A673 (cell line): ENCODE measurements at regions of chr13 and their contacts with region 1.

Region 1: DNA sequence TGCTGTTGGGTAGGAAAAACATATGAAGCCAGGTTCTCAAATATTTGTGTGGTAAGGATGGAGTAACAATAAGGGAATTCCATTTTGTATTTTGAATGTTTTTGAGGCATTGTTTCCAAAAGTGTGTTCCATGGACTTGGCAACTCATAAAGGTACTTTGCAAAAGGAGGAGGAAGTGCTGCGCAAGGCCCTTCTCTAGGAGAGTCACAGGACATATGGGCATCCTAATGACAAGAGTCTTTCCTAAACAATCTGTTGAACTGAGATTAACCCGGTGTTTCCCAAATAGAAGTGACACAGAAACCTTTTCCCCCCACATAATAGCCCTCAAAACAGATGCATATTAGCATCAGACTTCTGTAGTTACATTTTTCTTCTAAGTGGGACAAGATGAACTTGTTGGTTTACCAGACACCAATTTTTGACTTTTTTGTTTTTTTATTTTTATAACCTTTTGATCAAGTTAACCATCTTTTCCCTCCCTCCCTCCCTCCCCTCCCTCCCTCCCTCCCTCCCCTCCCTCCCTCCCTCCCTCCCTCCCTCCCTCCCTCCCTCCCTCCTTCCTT is 209.3 kb downstream of the PCCA start:
- DNase-seq: peak; percentile 95
- H3K4me3 ChIP-seq: no peak overlapping the region
- H3K27ac ChIP-seq: peak overlapping the region; percentile 98
- H3K4me1 ChIP-seq: peaks cover 84% of the 10 kb centered on the region
- H3K27me3 ChIP-seq: no peaks in the 10 kb centered on the region
- CTCF ChIP-seq: no peak

Region 2: DNA sequence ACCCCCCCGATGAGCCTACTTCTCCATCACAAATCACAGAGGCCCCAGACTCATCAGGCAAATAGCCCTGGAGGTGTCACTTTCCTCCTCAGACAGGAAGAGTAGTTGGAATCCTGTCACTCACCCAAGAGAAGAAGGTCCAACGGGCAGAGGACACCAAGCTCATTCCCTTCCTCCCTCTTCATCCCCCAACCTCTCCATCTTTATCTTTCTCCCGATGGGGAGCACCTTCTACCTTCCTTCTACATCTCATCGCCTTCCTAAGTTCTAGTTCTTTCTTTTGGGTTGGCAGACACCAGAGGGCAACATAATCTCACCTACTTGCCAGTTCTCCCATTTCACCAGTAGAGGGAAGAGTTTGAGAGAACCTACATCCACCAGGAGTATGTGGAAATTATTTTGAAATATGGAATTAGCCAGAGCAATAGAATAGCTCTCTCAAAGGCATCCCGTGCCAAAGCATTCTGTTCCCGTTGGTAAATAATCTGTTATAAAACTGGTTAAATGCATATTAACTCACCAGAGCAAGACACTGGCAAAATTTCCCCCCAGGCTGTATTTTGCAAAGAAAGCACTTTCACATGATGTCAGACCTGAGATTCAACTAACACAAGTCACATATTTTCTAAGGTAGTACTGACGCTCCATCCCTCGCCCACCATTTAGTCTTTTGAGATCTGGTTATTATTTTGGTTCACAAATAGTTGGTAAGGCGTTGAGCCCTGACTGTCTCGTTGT is 381.7 kb before region 1 on chr13:
- CTCF ChIA-PET with region 1: no interaction called
- POLR2A ChIA-PET with region 1: interaction called, 11 read pairs
- intact Hi-C with region 1: loop called (anchors 5 kb)
- DNase-seq: peak; percentile 85
- H3K4me3 ChIP-seq: no peak overlapping the region
- H3K27ac ChIP-seq: no peak overlapping the region
- H3K4me1 ChIP-seq: peaks cover 19% of the 10 kb centered on the region
- H3K27me3 ChIP-seq: no peaks in the 10 kb centered on the region
- CTCF ChIP-seq: peak; percentile 99

Region 3: GRCh38 chr13:99969919-99970621 is 328.1 kb before region 1 on chr13:
- CTCF ChIA-PET with region 1: no interaction called
- POLR2A ChIA-PET with region 1: interaction called, 23 read pairs
- intact Hi-C with region 1: no loop called
- DNase-seq: peak; percentile 93
- H3K4me3 ChIP-seq: peak overlapping the region; percentile 91
- H3K27ac ChIP-seq: peak overlapping the region; percentile 98
- H3K4me1 ChIP-seq: peaks cover 31% of the 10 kb centered on the region
- H3K27me3 ChIP-seq: no peaks in the 10 kb centered on the region
- CTCF ChIP-seq: no peak

Region 4: GRCh38 chr13:99987154-99988019 is 310.8 kb before region 1 on chr13:
- CTCF ChIA-PET with region 1: interaction called, 3 read pairs
- POLR2A ChIA-PET with region 1: interaction called, 11 read pairs
- intact Hi-C with region 1: loop called (anchors 2 kb)
- DNase-seq: peak; percentile 83
- H3K4me3 ChIP-seq: peak overlapping the region; percentile 95
- H3K27ac ChIP-seq: peak overlapping the region; percentile 96
- H3K4me1 ChIP-seq: peaks cover 47% of the 10 kb centered on the region
- H3K27me3 ChIP-seq: no peaks in the 10 kb centered on the region
- CTCF ChIP-seq: 0 out of 2 replicates have a peak, but pooled peaks have one; percentile 19

Region 5: DNA sequence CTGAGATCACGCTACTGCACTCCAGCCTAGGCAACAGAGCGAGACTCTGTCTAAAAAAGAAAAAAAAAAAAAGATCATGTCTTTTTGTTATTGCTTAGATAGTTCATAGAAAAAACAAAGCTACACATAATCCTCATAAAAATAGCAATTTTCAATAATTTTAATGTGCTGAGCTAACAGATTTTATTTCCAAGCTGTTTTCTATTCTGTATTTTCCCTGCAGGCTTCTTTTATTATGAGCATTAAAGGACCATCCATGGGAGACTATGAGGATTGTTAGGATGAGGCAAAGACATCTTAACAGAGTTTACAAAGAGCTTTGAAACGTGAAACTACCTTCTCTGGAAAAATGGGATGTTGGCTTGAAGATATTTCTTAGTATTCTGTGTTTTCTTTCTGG is 137.7 kb before region 1 on chr13:
- CTCF ChIA-PET with region 1: interaction called, 11 read pairs
- POLR2A ChIA-PET with region 1: no interaction called
- intact Hi-C with region 1: no loop called
- DNase-seq: no peak
- H3K4me3 ChIP-seq: no peak overlapping the region
- H3K27ac ChIP-seq: no peak overlapping the region
- H3K4me1 ChIP-seq: no peaks in the 10 kb centered on the region
- H3K27me3 ChIP-seq: no peaks in the 10 kb centered on the region
- CTCF ChIP-seq: no peak

Region 6: DNA sequence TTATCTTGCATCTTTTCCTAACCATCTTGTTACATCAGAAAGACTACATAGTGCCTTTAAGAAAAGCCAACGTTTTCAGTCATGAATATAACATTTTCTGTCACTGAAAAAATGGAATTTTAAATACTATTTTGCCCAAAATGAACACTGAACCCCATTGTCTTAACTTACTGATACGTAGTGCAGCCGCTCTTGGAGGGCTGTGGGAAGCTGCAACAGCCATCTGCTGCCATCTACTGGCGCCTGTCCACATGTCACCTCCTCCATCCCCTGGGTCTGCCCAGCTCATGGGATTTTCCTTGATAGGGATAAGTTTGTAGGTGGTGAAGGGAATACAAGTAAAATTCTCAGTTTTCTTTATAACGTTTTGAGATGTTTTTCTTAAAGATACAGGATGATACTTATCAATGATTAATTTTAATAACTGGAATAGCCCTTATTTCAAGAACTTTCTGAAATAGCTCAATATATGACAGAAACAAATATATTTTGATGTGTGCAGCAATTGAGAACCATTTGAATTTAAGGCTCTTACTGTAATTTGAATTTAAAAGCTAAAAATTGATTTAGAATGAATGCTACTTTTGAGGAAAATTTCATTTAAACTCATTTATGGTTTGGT is 216.7 kb after region 1 on chr13:
- CTCF ChIA-PET with region 1: interaction called, 3 read pairs
- POLR2A ChIA-PET with region 1: interaction called, 4 read pairs
- intact Hi-C with region 1: loop called (anchors 1 kb)
- DNase-seq: peak; percentile 94
- H3K4me3 ChIP-seq: peak overlapping the region; percentile 9
- H3K27ac ChIP-seq: peak overlapping the region; percentile 80
- H3K4me1 ChIP-seq: peaks cover 99% of the 10 kb centered on the region
- H3K27me3 ChIP-seq: no peaks in the 10 kb centered on the region
- CTCF ChIP-seq: peak; percentile 98

Region 7: DNA sequence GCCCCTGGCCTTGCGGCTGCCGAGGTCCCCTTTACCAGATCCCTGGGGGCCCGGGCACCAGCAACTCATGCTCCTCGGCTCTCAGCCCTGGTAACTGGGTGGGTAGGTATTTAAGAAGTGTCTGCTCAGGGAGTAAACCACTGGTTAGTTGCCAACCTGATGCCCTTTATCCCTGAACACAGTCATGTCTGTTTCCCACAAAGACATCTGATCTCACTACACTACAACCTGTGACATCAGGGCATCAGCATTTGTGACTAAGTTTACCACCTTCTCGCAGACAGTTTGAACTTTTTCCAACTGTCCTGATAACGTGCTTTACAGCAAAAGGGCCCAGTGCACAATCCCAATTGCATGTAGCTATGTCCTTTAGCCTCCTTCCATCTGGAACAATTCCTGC is 268.3 kb after region 1 on chr13:
- CTCF ChIA-PET with region 1: no interaction called
- POLR2A ChIA-PET with region 1: no interaction called
- intact Hi-C with region 1: no loop called
- DNase-seq: no peak
- H3K4me3 ChIP-seq: no peak overlapping the region
- H3K27ac ChIP-seq: no peak overlapping the region
- H3K4me1 ChIP-seq: no peaks in the 10 kb centered on the region
- H3K27me3 ChIP-seq: no peaks in the 10 kb centered on the region
- CTCF ChIP-seq: no peak